Heart right ventricle (tissue), 16 donors: ENCODE measurements at regions of chr1 and their contacts with region 1.

Region 1: GRCh38 chr1:10867138-10867721 is 70.8 kb upstream of the CASZ1 start:
- DNase-seq: peak; percentile 37 to 66
- ATAC-seq: peak; percentile 56 to 84 (median 71)
- H3K4me3 ChIP-seq: peak overlapping the region; percentile 6 to 52 (median 44)
- H3K27ac ChIP-seq: no peak overlapping the region
- H3K4me1 ChIP-seq: peaks cover 6 to 35% (median 17%) of the 10 kb centered on the region in 9 donors
- H3K27me3 ChIP-seq: peaks cover 0 to 81% (median 38%) of the 10 kb centered on the region in 7 donors
- CTCF ChIP-seq: peak; percentile 55 to 93 (median 80)

Region 2: GRCh38 chr1:10507111-10507879 is 359.9 kb before region 1 on chr1:
- intact Hi-C with region 1: loop called in 9 of 10 experiments (anchors 1 to 5 kb)
- DNase-seq: peak; percentile 49 to 54
- ATAC-seq: peak; percentile 41 to 88 (median 84)
- H3K4me3 ChIP-seq: no peak overlapping the region
- H3K27ac ChIP-seq: no peak overlapping the region
- H3K4me1 ChIP-seq: peaks cover 0 to 41% (median 26%) of the 10 kb centered on the region in 9 donors
- H3K27me3 ChIP-seq: no peaks in the 10 kb centered on the region
- CTCF ChIP-seq: peak; percentile 65 to 88 (median 82)

Region 3: DNA sequence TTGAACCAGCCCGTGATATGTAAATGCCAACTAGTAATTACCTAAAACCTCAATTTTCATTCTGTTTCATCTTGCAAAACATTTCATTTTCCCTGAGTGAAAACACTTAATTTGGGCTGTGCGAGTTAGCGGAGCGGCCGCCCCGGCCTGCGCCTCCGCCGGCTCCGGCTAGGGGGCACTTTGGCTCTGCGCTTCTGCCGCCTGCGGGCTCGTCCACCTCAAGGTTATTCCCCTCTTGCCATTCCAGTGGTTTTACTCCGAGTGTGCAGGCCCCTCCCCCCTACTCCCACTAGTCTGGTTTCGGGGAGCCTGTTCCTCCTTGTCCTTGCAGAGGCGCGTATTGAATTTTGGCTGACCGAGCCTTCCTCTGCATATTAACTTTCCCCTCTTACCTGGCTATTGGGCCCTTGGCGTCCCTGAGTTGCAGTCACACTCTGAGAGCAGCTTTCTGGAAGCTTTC is 336.9 kb before region 1 on chr1:
- intact Hi-C with region 1: loop called in 2 of 10 experiments (anchors 5 kb)
- DNase-seq: peak in 1 of 2 donors; percentile 40
- ATAC-seq: peak; percentile 43 to 68 (median 54)
- H3K4me3 ChIP-seq: peak overlapping the region in 1 of 10 donors; percentile 4
- H3K27ac ChIP-seq: peak overlapping the region in 2 of 10 donors; percentile 3 to 77
- H3K4me1 ChIP-seq: peaks cover 18 to 54% (median 33%) of the 10 kb centered on the region in 9 donors
- H3K27me3 ChIP-seq: no peaks in the 10 kb centered on the region
- CTCF ChIP-seq: peak; percentile 52 to 81 (median 67)

Region 4: GRCh38 chr1:10540277-10541005 is 326.8 kb before region 1 on chr1:
- intact Hi-C with region 1: no loop called
- DNase-seq: peak; percentile 31 to 51
- ATAC-seq: peak in 7 of 8 donors; percentile 70 to 84 (median 81)
- H3K4me3 ChIP-seq: peak overlapping the region in 1 of 10 donors; percentile 4
- H3K27ac ChIP-seq: peak overlapping the region in 9 of 10 donors; percentile 17 to 79 (median 63)
- H3K4me1 ChIP-seq: peaks cover 9 to 43% (median 29%) of the 10 kb centered on the region in 9 donors
- H3K27me3 ChIP-seq: no peaks in the 10 kb centered on the region
- CTCF ChIP-seq: no peak

Region 5: GRCh38 chr1:10663678-10664035 is 203.6 kb before region 1 on chr1:
- intact Hi-C with region 1: loop called in 3 of 10 experiments (anchors 10 kb)
- DNase-seq: peak; percentile 57 to 72
- ATAC-seq: peak; percentile 54 to 86 (median 77)
- H3K4me3 ChIP-seq: no peak overlapping the region
- H3K27ac ChIP-seq: peak overlapping the region; percentile 71 to 91 (median 88)
- H3K4me1 ChIP-seq: peaks cover 18 to 65% (median 56%) of the 10 kb centered on the region in 9 donors
- H3K27me3 ChIP-seq: no peaks in the 10 kb centered on the region
- CTCF ChIP-seq: no peak

Region 6: DNA sequence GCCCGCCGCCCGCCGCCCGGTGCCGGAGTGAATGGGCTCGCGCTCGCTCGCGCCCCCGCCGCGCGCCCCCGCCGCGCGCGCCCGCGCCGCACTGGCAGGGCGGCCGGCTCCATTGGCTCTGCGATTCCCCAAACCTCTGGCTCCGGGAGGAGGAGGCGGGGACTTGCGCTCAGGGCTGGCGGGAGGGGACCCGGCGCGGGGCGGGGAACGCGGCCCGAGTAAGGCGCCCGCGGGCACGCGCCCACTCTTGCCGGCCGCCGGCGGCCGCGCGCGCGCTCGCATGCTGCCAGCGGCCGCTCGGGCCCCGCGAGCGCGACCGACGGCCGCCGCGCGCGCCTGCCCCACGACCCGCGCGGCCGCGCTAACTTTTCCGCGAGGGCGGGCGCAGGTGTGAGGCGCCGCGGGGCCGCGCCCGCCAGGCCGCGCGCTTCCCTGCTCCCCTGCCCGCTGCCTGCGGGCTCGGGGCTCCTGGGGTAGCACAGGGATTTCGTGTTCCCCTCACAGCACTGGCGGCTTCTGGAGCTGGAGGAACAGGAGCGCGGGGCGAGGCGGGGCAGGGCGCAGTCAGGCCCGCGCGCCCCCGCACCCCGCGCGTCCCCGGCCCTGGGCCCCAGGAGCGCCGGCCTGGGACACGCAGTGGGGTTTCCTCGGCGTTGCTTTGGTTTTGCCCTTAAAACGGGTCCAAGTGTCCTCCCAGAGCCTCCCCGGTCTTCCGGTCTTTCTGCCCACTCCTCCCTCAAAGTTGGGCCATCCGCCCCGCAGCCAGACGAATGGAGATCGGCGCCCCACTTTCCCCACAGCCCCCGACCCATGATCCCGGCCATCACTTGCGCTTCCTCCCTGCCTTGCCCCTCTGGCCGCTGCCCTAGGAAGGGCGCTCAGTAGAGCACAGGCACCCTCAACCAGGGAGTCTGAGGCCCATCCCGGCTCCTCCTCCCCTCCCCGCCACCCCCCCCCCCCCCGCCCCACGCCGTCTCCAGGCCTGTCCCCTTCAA is 172.3 kb before region 1 on chr1:
- intact Hi-C with region 1: loop called in 3 of 10 experiments (anchors 5 to 10 kb)
- DNase-seq: peak; percentile 90 to 91
- ATAC-seq: peak; percentile 23 to 92 (median 77)
- H3K4me3 ChIP-seq: peak overlapping the region; percentile 21 to 62 (median 56)
- H3K27ac ChIP-seq: peak overlapping the region; percentile 75 to 92 (median 88)
- H3K4me1 ChIP-seq: peaks cover 16 to 66% (median 46%) of the 10 kb centered on the region in 9 donors
- H3K27me3 ChIP-seq: peaks cover 0 to 3% (median 0%) of the 10 kb centered on the region in 7 donors
- CTCF ChIP-seq: no peak

Region 7: GRCh38 chr1:10779201-10779600 is 88.0 kb before region 1 on chr1:
- intact Hi-C with region 1: no loop called
- DNase-seq: no peak
- ATAC-seq: peak in 7 of 8 donors; percentile 36 to 78 (median 74)
- H3K4me3 ChIP-seq: no peak overlapping the region
- H3K27ac ChIP-seq: peak overlapping the region in 4 of 10 donors; percentile 24 to 58 (median 44)
- H3K4me1 ChIP-seq: peaks cover 0 to 82% (median 56%) of the 10 kb centered on the region in 9 donors
- H3K27me3 ChIP-seq: peaks cover 0 to 4% (median 0%) of the 10 kb centered on the region in 7 donors
- CTCF ChIP-seq: no peak

Region 8: GRCh38 chr1:10824821-10825423 is 42.3 kb before region 1 on chr1:
- intact Hi-C with region 1: loop called in 1 of 10 experiments (anchors 5 kb)
- DNase-seq: no peak
- ATAC-seq: no peak
- H3K4me3 ChIP-seq: no peak overlapping the region
- H3K27ac ChIP-seq: no peak overlapping the region
- H3K4me1 ChIP-seq: peaks cover 0 to 34% (median 12%) of the 10 kb centered on the region in 9 donors
- H3K27me3 ChIP-seq: peaks cover 0 to 27% (median 14%) of the 10 kb centered on the region in 7 donors
- CTCF ChIP-seq: no peak

Region 9: DNA sequence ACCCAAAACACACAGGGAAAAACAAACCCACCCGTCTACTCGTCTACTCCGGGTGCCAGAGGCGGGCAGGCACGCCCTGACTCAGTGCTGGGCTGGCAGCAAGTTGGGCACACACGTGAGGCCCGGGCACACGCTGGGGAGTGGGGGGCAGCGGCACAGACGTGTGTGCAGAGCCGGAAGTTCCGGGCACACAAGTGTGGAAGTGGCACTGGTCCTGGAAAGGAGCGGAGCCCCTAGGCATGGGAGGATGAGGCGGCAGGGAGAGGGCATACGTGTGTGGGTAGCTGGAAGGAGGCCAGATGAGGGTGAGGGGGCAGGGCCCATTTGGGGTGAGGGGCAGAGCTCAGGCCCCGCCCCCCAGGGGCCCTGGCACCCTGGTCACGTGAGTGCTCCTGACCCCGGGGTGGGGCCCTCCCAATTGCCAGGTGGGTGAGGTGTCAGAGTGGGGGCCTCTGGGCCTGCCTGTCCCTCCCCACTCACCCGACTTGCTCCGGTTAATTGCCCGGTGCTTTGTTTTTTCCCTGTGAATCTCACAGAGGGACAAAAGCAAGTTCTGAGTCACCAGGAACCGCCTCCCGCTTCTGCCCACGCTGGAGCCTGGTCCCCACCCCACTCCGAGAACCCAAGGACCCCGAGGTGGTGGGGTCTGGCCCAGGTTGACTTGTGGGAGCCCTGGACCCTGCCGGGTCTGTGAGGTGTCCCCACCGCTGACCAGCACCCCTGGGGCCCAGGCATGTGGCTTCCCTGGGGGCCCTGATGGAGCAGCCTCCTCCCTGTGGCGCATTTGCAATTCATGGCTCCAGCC is 34.1 kb after region 1 on chr1:
- intact Hi-C with region 1: no loop called
- DNase-seq: no peak
- ATAC-seq: no peak
- H3K4me3 ChIP-seq: no peak overlapping the region
- H3K27ac ChIP-seq: no peak overlapping the region
- H3K4me1 ChIP-seq: peaks cover 0 to 7% (median 0%) of the 10 kb centered on the region in 9 donors
- H3K27me3 ChIP-seq: peaks cover 0 to 53% (median 42%) of the 10 kb centered on the region in 7 donors
- CTCF ChIP-seq: no peak